ENCODE measurements at regions of chr9 and their contacts with region 1.

Region 1: DNA sequence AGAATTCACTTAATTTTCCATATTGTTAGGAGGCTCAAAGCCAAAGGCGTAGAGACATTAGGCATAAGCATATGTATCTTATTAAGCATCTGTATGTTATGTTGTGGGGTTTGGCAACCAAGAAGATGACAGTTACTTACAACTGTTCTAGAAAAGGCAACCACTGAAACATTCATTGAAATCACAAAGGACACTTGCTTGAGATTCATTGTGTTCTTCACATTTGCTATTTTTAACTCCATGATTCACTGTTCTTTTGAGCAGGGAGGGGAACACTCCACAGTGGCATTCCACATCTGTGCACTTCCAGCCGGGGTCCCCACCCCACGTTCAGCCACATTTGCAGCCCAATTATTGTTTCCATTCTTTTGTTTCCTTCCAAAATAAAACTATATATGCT is 107.1 kb downstream of the PALM2AKAP2 start:
- DNase-seq: no peak
- H3K4me3 Mint-ChIP-seq: no peak overlapping the region
- H3K27ac Mint-ChIP-seq: peak overlapping the region; percentile 89
- H3K4me1 Mint-ChIP-seq: peaks cover 76% of the 10 kb centered on the region
- H3K27me3 Mint-ChIP-seq: no peaks in the 10 kb centered on the region

Region 2: GRCh38 chr9:109463924-109464625 is 423.0 kb before region 1 on chr9:
- intact Hi-C with region 1: loop called (anchors 5 kb)
- DNase-seq: no peak
- H3K4me3 Mint-ChIP-seq: peak overlapping the region; percentile 31
- H3K27ac Mint-ChIP-seq: peak overlapping the region; percentile 93
- H3K4me1 Mint-ChIP-seq: peaks cover 68% of the 10 kb centered on the region
- H3K27me3 Mint-ChIP-seq: peaks cover 3% of the 10 kb centered on the region

Region 3: GRCh38 chr9:109817846-109818472 is 69.1 kb before region 1 on chr9:
- intact Hi-C with region 1: loop called (anchors 5 kb)
- DNase-seq: peak; percentile 20
- H3K4me3 Mint-ChIP-seq: no peak overlapping the region
- H3K27ac Mint-ChIP-seq: no peak overlapping the region
- H3K4me1 Mint-ChIP-seq: no peaks in the 10 kb centered on the region
- H3K27me3 Mint-ChIP-seq: peaks cover 3% of the 10 kb centered on the region

Region 4: GRCh38 chr9:109950710-109951443 is 63.8 kb after region 1 on chr9:
- intact Hi-C with region 1: loop called (anchors 1 kb)
- DNase-seq: no peak
- H3K4me3 Mint-ChIP-seq: peak overlapping the region; percentile 57
- H3K27ac Mint-ChIP-seq: peak overlapping the region; percentile 93
- H3K4me1 Mint-ChIP-seq: peaks cover 43% of the 10 kb centered on the region
- H3K27me3 Mint-ChIP-seq: no peaks in the 10 kb centered on the region

Region 5: GRCh38 chr9:110152704-110153374 is 265.8 kb after region 1 on chr9:
- intact Hi-C with region 1: loop called (anchors 1 kb)
- DNase-seq: no peak
- H3K4me3 Mint-ChIP-seq: peak overlapping the region; percentile 37
- H3K27ac Mint-ChIP-seq: peak overlapping the region; percentile 77
- H3K4me1 Mint-ChIP-seq: peaks cover 95% of the 10 kb centered on the region
- H3K27me3 Mint-ChIP-seq: no peaks in the 10 kb centered on the region

Measured in activated T-helper 2 cell treated with anti-CD3 and anti-CD28 coated beads, Interferon-gamma antibody, Interleukin-2, Interleukin-4, amounts not matched to agents 10 μg/mL and 5 μg/mL and 100 μg/mL, durations not matched to agents 14 hours and 24 hours and 36 hours (primary cell).